ENCODE measurements at regions of chr1 and their contacts with region 1.

Region 1: GRCh38 chr1:41360993-41361753 is at the start of gene FOXO6:
- DNase-seq: peak; percentile 98
- ATAC-seq: peak; percentile 86
- H3K4me3 Mint-ChIP-seq: peak within 1 kb of the TSS; percentile 70
- H3K27ac Mint-ChIP-seq: no peak within 1 kb of the TSS
- H3K4me1 Mint-ChIP-seq: peaks cover 54% of the 10 kb centered on the region
- H3K27me3 Mint-ChIP-seq: peaks cover 63% of the 10 kb centered on the region
- CTCF ChIP-seq: peak; percentile 67
- total RNA-seq, gene FOXO6: 5.4 to 7.4 TPM (median 7.0 TPM) in 3 replicates

Region 2: GRCh38 chr1:41313661-41314131 is 47.5 kb before region 1 on chr1:
- CTCF ChIA-PET with region 1: interaction called, 17 read pairs
- POLR2A ChIA-PET with region 1: no interaction called
- DNase-seq: peak; percentile 59
- ATAC-seq: peak; percentile 79
- H3K4me3 Mint-ChIP-seq: no peak overlapping the region
- H3K27ac Mint-ChIP-seq: no peak overlapping the region
- H3K4me1 Mint-ChIP-seq: peaks cover 22% of the 10 kb centered on the region
- H3K27me3 Mint-ChIP-seq: peaks cover 10% of the 10 kb centered on the region
- CTCF ChIP-seq: peak; percentile 70

Region 3: DNA sequence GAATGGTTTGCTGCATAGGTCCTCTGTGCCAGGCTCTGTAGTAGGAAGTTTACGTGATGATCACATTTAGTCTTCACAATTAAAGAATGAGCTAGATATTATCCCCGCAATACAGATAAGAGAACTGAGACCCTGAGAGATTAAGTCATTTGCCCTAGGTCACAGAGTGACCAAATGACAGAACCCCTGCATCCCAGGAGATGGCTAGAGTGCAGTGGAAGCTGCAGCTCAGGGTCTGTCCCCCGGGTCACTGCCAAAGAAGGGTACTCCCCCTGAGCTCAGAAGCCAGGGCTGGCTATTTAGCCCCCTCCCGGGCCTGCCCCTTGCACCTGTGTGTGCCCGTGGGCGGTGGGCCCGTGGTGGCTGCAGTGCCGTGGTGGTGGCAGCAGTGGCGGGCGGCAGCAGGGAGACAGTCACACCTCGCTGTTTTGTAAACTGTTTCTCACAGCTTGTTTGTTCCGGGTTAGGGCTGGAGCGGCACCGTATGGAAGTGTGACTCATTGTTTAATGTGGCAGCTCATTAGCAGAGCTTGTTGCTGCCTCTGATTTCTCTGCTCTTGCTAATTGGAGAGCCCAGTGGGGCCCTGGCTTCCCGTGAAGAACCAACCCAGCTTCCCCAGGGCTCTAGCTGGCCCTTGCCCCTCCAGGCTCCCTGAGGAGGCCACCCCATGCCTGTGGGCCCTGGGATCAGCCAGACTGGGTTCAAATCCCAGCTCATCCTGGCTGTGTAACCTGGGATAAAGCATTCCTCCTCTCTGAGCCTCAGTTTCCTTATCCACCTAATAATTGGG is 19.2 kb before region 1 on chr1:
- CTCF ChIA-PET with region 1: interaction called, 12 read pairs
- POLR2A ChIA-PET with region 1: no interaction called
- DNase-seq: no peak
- ATAC-seq: peak; percentile 40; the same call in 1 of the 2 replicates
- H3K4me3 Mint-ChIP-seq: no peak overlapping the region
- H3K27ac Mint-ChIP-seq: no peak overlapping the region
- H3K4me1 Mint-ChIP-seq: peaks cover 6% of the 10 kb centered on the region
- H3K27me3 Mint-ChIP-seq: peaks cover 12% of the 10 kb centered on the region
- CTCF ChIP-seq: no peak

Region 4: GRCh38 chr1:41387667-41388091 is 26.5 kb after region 1 on chr1:
- CTCF ChIA-PET with region 1: interaction called, 106 read pairs
- POLR2A ChIA-PET with region 1: interaction called, 4 read pairs
- DNase-seq: peak; percentile 84
- ATAC-seq: peak; percentile 92
- H3K4me3 Mint-ChIP-seq: no peak overlapping the region
- H3K27ac Mint-ChIP-seq: peak overlapping the region; percentile 38
- H3K4me1 Mint-ChIP-seq: peaks cover 46% of the 10 kb centered on the region
- H3K27me3 Mint-ChIP-seq: peaks cover 39% of the 10 kb centered on the region
- CTCF ChIP-seq: no peak

Region 5: DNA sequence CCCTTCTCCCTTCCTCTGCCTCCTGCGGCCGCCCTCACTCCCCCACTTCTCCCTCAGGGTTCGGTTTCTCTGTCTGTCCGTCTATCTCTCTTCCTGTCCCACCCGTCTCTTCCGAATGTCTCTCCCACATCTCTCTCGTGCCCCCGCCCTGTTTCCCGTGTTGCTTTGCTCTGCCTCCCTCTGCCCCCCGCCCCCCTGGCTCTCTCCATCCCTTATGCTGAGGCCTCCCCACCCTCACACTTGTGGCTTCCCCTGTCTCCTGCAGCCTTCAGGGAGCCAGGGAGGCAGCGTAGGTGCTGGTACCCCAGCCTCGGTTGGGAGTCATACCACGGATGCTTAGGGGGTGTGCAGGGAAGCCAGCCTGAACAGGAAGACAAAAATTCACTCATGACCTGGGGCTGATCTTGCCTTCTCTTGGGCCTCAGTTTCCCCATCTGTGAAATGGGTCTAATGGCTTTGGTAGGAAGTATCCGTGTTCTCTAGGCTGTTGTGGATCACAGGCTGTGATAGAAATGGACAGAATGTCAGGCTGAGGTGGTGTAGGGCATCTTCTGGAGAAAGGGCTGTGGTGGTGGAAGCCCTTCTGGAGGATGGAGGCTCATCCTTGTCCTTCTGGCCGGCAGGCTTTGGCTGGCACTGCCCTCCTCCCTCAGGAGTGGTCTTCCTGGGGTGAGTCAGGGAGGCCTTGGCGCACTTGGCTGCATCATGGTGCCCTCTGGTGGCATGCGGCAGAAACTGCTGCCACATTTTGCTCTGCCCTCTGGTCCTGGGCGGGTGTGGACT is 55.6 kb after region 1 on chr1:
- CTCF ChIA-PET with region 1: interaction called, 70 read pairs
- POLR2A ChIA-PET with region 1: interaction called, 3 read pairs
- DNase-seq: peak; percentile 82
- ATAC-seq: peak; percentile 86
- H3K4me3 Mint-ChIP-seq: no peak overlapping the region
- H3K27ac Mint-ChIP-seq: no peak overlapping the region
- H3K4me1 Mint-ChIP-seq: peaks cover 15% of the 10 kb centered on the region
- H3K27me3 Mint-ChIP-seq: peaks cover 3% of the 10 kb centered on the region; the same call in 1 of the 2 replicates
- CTCF ChIP-seq: peak; percentile 76